HEK293 (cell line): ENCODE measurements at regions of chr1 and their contacts with region 1.

Region 1: GRCh38 chr1:224149713-224150112 is 33.3 kb upstream of the DEGS1 start:
- H3K4me3 ChIP-seq: no peak overlapping the region
- H3K27ac ChIP-seq: no peak overlapping the region
- H3K4me1 ChIP-seq: no peaks in the 10 kb centered on the region
- CTCF ChIP-seq: no peak

Region 2: GRCh38 chr1:223695941-223696340 is 453.8 kb before region 1 on chr1:
- CTCF ChIA-PET with region 1: interaction called, 10 read pairs
- POLR2A ChIA-PET with region 1: no interaction called
- H3K4me3 ChIP-seq: no peak overlapping the region
- H3K27ac ChIP-seq: no peak overlapping the region
- H3K4me1 ChIP-seq: peaks cover 3% of the 10 kb centered on the region
- CTCF ChIP-seq: no peak

Region 3: DNA sequence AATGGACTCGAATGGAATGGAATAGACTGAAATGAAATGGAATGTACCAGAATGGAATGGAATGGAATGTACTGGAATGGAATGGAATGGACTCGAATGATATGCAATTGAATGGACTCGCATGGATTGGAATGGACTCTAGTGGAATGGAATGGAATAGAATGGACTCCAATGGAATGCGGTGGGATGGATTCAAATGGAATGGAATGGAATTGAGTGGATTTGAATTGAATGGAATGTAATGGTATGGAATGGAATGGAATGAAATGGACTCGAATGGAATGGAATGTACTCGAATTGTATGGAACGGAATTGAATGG is 135.4 kb before region 1 on chr1:
- CTCF ChIA-PET with region 1: no interaction called
- POLR2A ChIA-PET with region 1: no interaction called
- H3K4me3 ChIP-seq: no peak overlapping the region
- H3K27ac ChIP-seq: no peak overlapping the region
- H3K4me1 ChIP-seq: no peaks in the 10 kb centered on the region
- CTCF ChIP-seq: no peak; the same call in 1 of the 2 replicates

Region 4: DNA sequence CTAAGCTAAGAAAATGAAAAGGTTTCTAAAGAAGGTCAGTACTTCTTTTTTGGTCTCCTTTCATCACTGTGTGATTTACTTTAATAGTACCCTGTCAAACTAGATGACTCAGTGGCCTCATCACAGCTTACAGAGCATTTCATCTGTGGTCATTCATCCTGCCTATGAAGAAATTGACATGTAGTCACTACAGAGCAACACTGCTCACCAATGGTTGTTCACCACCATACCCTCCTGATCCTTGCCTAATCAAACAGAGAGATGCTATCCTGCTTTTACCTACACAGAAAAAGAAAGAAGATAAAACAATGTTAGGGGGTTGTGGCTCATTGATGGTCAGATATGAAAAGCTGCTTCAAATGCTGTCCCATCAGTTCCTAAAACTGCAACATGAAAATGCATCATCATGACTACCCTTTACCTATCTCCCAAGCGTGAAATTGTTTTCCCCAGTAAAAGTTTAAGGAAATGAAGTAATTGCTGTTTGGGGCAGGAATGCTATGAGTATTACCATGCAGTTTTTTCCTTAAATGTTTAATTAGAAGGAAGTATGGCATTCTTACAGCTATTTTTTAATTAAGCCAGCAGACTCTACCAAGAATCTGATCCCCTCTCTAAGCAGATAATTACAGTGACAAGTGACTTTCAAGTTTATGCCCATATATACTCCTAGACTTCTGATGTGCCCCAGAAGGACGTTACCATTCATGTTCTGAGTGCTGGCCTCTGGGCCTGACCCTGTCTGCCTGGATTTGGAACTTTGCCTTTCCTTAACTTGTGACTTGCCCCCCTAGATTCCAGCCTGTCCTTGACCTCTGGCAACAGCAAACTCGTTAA is 81.9 kb before region 1 on chr1:
- CTCF ChIA-PET with region 1: no interaction called
- POLR2A ChIA-PET with region 1: no interaction called
- H3K4me3 ChIP-seq: no peak overlapping the region
- H3K27ac ChIP-seq: no peak overlapping the region
- H3K4me1 ChIP-seq: peaks cover 28% of the 10 kb centered on the region
- CTCF ChIP-seq: no peak

Region 5: GRCh38 chr1:224162768-224163167 is 13.1 kb after region 1 on chr1:
- CTCF ChIA-PET with region 1: interaction called, 13 read pairs
- POLR2A ChIA-PET with region 1: no interaction called
- H3K4me3 ChIP-seq: no peak overlapping the region
- H3K27ac ChIP-seq: no peak overlapping the region
- H3K4me1 ChIP-seq: no peaks in the 10 kb centered on the region
- CTCF ChIP-seq: no peak

Region 6: GRCh38 chr1:224182866-224183590 is 33.3 kb after region 1 on chr1 and contains the start of gene DEGS1:
- CTCF ChIA-PET with region 1: interaction called, 11 read pairs
- POLR2A ChIA-PET with region 1: interaction called, 15 read pairs
- H3K4me3 ChIP-seq: peak within 1 kb of the TSS; percentile 72
- H3K27ac ChIP-seq: peak within 1 kb of the TSS; percentile 99
- H3K4me1 ChIP-seq: peaks cover 3% of the 10 kb centered on the region; the same call in 1 of the 2 replicates
- CTCF ChIP-seq: peak; percentile 36